ENCODE measurements at regions of chr7 and their contacts with region 1.

Region 1: DNA sequence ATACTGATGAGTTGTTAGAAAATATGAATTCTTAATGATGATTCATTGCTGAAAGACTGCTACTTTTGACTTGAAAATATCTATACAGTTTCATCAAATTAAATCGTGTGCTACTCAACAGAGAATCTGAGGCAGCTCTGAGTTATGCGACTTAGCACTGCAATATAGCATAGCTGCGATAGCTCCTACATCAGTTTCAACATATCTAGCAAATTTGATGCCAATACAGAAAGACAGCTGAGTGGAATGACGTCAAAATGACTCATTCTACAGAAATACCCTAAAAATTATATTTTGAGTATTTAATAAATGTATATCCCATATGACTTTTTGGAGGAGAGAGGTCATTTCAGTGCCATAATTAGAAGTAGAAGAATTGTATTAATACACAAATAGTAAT is 1.1 kb upstream of the TARP start:
- DNase-seq: no peak
- H3K4me3 Mint-ChIP-seq: no peak overlapping the region
- H3K27ac Mint-ChIP-seq: no peak overlapping the region
- H3K4me1 Mint-ChIP-seq: no peaks in the 10 kb centered on the region
- H3K27me3 Mint-ChIP-seq: no peaks in the 10 kb centered on the region

Region 2: GRCh38 chr7:38141187-38141586 is 133.3 kb before region 1 on chr7:
- CTCF ChIA-PET with region 1: no interaction called
- POLR2A ChIA-PET with region 1: no interaction called
- intact Hi-C with region 1: no loop called
- DNase-seq: no peak
- H3K4me3 Mint-ChIP-seq: no peak overlapping the region
- H3K27ac Mint-ChIP-seq: no peak overlapping the region
- H3K4me1 Mint-ChIP-seq: no peaks in the 10 kb centered on the region
- H3K27me3 Mint-ChIP-seq: no peaks in the 10 kb centered on the region

Region 3: DNA sequence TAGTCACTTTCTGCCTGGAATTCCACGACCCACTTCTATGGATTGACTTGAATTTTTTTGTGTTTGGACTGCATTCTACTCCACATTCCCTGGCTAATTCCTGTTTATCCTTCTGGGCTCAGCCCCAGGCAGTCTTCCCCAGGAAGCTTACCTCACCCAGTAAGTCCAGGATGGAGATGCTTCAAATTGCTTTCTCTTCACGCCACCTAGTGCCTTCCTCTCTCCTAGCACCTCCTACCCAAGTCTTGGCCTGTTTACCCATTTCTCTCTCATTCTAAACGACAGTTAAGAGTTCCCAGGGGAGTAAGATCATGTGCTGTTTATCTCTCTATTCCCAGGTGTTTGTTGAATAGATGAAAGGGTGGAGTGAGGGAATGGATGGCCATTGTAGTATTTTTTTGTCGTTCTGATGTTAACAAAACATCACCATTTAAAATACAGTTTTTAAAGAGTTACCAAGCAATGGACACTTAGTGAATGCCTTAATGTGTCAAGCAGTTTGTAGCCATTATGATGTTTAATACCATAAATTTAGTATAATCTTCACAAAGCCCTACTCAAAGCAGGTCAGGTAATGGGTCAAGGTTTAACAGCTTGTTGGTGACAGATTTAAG is 44.4 kb after region 1 on chr7:
- CTCF ChIA-PET with region 1: no interaction called
- POLR2A ChIA-PET with region 1: no interaction called
- intact Hi-C with region 1: loop called (anchors 5 kb)
- DNase-seq: peak; percentile 30
- H3K4me3 Mint-ChIP-seq: peak overlapping the region; percentile 38
- H3K27ac Mint-ChIP-seq: peak overlapping the region; percentile 67
- H3K4me1 Mint-ChIP-seq: peaks cover 25% of the 10 kb centered on the region
- H3K27me3 Mint-ChIP-seq: no peaks in the 10 kb centered on the region

Region 4: DNA sequence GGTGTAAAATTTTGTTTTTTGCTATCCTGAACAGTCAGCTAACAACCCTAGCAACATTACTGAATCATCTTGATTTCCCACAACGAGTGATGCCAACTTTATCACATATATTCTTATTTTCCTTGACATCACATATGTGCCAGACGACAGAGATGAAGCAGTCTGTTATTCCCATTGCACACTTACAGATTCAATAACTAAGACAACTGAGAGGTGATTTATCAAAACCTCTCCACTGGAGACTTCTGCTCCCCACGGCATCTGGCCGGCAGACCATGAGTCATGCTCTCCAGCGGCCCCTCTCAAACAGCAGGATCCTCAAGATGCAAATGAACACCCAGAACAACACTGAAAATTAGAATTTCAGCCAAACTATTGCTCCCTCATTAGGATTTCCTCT is 299.6 kb after region 1 on chr7:
- CTCF ChIA-PET with region 1: no interaction called
- POLR2A ChIA-PET with region 1: no interaction called
- intact Hi-C with region 1: no loop called
- DNase-seq: no peak
- H3K4me3 Mint-ChIP-seq: no peak overlapping the region
- H3K27ac Mint-ChIP-seq: no peak overlapping the region
- H3K4me1 Mint-ChIP-seq: no peaks in the 10 kb centered on the region
- H3K27me3 Mint-ChIP-seq: peaks cover 5% of the 10 kb centered on the region

Measured in activated CD4-positive, alpha-beta memory T cell treated with anti-CD3 and anti-CD28 coated beads for 36 hours (primary cell).